ENCODE measurements at regions of chr20 and their contacts with region 1.

Region 1: DNA sequence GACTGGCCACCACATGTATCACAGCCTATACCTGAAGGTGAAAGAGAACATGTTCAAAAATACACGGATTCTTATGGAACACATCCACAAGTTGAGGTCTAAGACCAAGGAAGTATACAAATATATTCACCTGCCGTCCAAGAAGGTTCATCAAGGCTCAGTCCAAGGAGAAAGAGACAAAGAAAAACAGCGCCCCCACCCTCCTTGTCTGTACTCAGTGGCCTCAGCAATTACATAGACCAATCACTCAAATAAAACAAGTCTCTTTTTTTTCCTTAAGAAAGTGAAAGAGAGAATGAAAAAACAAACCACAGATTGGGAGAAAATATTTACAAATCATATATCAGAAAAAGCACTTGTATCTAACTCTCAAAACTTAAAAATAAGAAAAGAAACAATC is 19.5 kb downstream of the CPXM1 start:
- DNase-seq: no peak

Region 2: GRCh38 chr20:2005831-2006426 is 775.0 kb before region 1 on chr20:
- intact Hi-C with region 1: loop called in 1 of 2 experiments (anchors 10 kb)
- DNase-seq: peak; percentile 90

Region 3: DNA sequence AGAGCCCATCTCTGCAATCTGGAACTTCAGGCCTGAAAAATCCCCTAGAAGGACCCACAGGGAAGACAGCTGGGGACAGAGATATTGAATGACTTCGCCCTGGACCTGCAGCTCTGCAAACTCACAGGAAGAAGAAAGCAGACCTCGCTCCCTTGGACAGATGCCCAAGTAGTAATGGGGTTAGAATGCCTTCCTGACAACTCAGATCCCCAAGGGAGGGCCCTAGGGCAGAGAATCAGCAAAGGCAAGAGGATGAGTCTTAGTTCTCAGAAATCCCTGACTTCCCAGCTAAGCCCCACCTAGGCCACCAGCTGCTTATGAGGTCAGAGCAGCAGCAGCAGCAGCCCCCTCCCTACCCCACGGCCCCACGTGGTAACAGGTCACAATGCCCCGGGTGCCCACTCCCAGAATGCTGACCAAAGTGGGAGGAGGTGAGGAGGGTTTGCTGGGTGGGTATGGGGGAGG is 33.7 kb after region 1 on chr20 and contains the start of gene C20orf141:
- intact Hi-C with region 1: no loop called
- DNase-seq: no peak
- total RNA-seq, gene C20orf141: not detected